Mammary epithelial cell (primary cell): ENCODE measurements at regions of chr2 and their contacts with region 1.

Region 1: DNA sequence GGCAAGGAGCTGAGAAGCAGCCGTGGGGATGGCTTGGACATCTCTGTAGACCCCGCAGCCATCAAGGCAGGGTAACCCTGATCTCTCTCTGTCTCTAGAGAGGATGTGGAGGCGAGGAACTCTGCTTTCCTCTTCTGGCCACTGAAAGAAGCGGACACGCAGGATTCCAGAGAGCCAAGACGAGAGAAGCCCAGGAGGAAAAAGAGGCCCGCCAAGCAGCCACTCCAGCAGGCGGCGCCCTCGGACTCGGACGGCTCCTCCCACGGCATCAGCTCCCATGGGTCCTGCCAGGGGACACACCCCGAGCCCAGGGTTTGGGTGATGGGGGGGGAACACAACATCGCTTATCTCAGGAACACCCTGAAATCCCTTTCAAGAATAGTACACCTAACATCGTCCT is 34.5 kb upstream of the CNGA3 start:
- DNase-seq: no peak
- H3K4me3 ChIP-seq: no peak overlapping the region
- H3K27ac ChIP-seq: no peak overlapping the region
- H3K4me1 ChIP-seq: no peaks in the 10 kb centered on the region
- H3K27me3 ChIP-seq: no peaks in the 10 kb centered on the region
- CTCF ChIP-seq: peak; percentile 13 to 21

Region 2: DNA sequence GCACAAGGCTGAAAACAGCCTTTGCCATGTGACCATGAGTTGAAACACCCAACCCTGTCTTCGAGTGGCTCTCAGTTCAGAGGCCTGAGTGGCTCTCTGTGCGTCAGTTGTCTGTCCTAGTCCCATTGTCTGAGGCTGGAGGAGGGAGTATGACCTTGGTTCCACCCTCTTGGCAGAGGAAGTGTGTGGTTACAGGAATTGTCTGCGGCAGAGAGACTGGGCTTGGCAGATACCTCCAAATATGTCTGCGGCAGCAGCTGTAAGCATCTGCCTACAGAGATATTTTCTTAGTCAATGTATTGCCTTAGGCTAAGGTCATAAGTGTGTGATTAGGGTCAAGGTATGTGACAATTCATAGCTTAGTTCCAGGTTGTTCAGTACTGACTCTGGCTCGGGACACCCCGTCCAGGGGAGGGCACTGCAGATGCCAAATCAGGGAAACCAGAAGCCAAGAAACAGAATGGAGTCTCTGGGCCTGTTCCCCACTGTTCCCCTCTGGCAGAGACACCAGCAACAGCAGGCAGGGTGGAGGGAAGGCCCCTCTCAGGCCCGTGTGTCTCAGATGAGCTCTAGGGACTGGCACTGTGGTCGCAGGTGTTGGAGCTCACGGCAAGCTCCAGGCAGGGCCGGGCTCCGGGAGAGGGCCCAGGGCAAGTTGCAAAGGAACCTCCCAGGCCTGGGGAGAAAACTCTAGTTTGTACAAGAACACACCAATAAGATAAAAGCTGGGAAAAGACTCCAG is 67.4 kb after region 1 on chr2:
- CTCF ChIA-PET with region 1: no interaction called
- dilution Hi-C with region 1: loop called (anchors 5 kb)
- in situ Hi-C with region 1: no loop called
- intact Hi-C with region 1: no loop called
- DNase-seq: peak; percentile 84
- H3K4me3 ChIP-seq: no peak overlapping the region
- H3K27ac ChIP-seq: no peak overlapping the region
- H3K4me1 ChIP-seq: peaks cover 14% of the 10 kb centered on the region
- H3K27me3 ChIP-seq: peaks cover 28% of the 10 kb centered on the region
- CTCF ChIP-seq: no peak